ENCODE measurements at regions of chr17 and their contacts with region 1.

Region 1: GRCh38 chr17:56779898-56780733 is 53.6 kb downstream of the C17orf67 start:
- DNase-seq: peak; percentile 95
- ATAC-seq: peak; percentile 91
- H3K4me3 ChIP-seq: peak overlapping the region; percentile 70
- H3K27ac ChIP-seq: peak overlapping the region; percentile 37
- H3K4me1 ChIP-seq: peaks cover 52% of the 10 kb centered on the region
- H3K27me3 ChIP-seq: no peaks in the 10 kb centered on the region
- CTCF ChIP-seq: peak; percentile 97

Region 2: DNA sequence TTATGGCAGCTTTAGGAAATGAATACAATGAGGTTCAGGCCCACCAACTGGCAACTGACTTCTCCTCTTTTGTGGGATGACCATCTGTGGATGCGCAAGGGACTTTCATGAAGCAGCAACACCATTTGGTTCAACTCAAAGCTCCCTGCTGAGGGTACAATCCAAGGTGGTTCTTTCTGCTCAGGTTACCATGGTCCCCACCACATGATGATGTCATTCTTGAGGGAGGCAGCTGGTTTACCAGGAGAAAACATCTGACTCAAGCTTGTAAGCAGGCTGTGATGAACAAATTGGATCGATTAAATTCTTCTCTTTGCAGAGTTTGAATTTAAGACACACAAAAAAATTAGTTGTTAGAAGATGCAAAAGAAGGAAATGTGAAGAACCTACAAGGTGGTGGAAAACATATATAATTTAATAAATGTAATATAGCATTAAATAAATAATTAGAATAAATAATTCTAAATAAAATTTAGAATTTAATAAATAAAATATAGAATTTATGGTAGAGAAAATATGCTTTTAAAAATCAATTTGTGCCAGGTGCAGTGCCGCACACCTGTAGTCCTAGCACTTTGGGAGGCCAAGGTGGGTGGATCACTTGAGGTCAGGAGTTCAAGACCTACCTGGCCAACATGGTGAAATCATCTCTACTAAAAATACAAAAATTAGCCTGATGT is 694.4 kb before region 1 on chr17:
- CTCF ChIA-PET with region 1: no interaction called
- POLR2A ChIA-PET with region 1: no interaction called
- intact Hi-C with region 1: no loop called
- DNase-seq: no peak
- ATAC-seq: no peak
- H3K4me3 ChIP-seq: no peak overlapping the region
- H3K27ac ChIP-seq: no peak overlapping the region
- H3K4me1 ChIP-seq: no peaks in the 10 kb centered on the region
- H3K27me3 ChIP-seq: peaks cover 14% of the 10 kb centered on the region; the same call in 1 of the 2 replicates
- CTCF ChIP-seq: no peak

Region 3: DNA sequence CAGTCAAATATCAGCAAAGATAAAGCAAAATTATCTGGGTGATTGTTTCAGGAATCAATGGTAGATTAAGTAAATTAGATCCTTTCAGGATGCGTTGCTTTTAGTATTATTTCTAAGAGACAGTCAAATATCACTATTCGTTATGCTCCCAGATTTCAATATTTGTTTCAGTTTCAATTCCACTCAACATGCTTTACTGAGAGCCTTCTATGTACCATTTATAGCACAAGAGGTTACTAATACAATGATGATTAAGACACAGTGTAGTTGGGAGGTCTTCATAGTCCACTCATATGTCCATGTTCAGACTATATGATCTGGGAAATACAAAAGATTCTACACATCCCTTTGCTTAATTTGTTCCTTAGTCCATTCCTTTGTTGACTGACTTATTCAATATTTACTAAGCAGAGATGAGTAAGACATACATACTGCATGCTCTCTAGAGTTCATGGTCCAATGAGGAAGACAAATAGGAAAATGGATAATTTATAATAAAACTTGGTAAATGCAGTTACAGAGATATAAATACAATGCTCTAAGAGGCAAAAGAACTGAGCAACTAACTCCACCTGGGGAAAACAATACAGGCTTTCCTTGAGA is 274.9 kb before region 1 on chr17:
- CTCF ChIA-PET with region 1: no interaction called
- POLR2A ChIA-PET with region 1: no interaction called
- intact Hi-C with region 1: loop called (anchors 2 kb)
- DNase-seq: peak; percentile 62
- ATAC-seq: peak; percentile 91
- H3K4me3 ChIP-seq: no peak overlapping the region
- H3K27ac ChIP-seq: no peak overlapping the region
- H3K4me1 ChIP-seq: peaks cover 8% of the 10 kb centered on the region; the same call in 1 of the 2 replicates
- H3K27me3 ChIP-seq: peaks cover 43% of the 10 kb centered on the region
- CTCF ChIP-seq: no peak

Region 4: DNA sequence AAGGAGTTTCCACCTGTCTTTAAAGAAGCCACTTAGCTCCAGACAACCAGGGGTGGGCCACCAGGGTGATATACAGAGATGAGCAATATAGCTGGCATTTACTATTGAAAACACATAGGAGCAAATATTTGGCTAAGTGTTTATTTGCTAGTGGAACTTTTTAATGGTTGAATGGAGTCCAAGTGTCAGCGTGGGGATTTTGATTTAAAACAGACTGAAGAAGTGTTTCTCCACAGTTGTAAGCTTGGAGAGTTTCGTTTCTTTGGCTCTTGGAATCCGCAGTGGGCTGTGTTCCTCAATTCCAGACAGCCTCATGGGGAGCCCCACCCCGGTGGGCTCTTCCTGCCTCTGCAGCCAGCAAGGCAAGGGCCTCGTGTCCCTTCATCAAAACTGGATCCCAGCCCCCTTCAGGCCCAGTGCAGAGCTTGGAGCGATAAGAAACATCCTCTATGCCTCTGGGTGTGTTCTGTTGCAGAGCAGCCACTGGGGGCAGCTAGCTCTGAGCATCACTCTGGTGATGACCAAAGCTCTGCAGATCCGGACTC is 150.5 kb before region 1 on chr17:
- CTCF ChIA-PET with region 1: no interaction called
- POLR2A ChIA-PET with region 1: interaction called, 5 read pairs
- intact Hi-C with region 1: loop called (anchors 1 kb)
- DNase-seq: peak; percentile 71
- ATAC-seq: peak; percentile 97
- H3K4me3 ChIP-seq: no peak overlapping the region; the same call in 1 of the 2 replicates
- H3K27ac ChIP-seq: no peak overlapping the region
- H3K4me1 ChIP-seq: peaks cover 11% of the 10 kb centered on the region; the same call in 1 of the 2 replicates
- H3K27me3 ChIP-seq: no peaks in the 10 kb centered on the region
- CTCF ChIP-seq: peak; percentile 70

Region 5: GRCh38 chr17:56679115-56679766 is 100.9 kb before region 1 on chr17:
- CTCF ChIA-PET with region 1: interaction called, 6 read pairs
- POLR2A ChIA-PET with region 1: no interaction called
- intact Hi-C with region 1: loop called (anchors 1 kb)
- DNase-seq: peak; percentile 68
- ATAC-seq: peak; percentile 45
- H3K4me3 ChIP-seq: peak overlapping the region; percentile 19; the same call in 1 of the 2 replicates
- H3K27ac ChIP-seq: peak overlapping the region; percentile 61
- H3K4me1 ChIP-seq: peaks cover 71% of the 10 kb centered on the region
- H3K27me3 ChIP-seq: no peaks in the 10 kb centered on the region
- CTCF ChIP-seq: peak; percentile 95

Region 6: GRCh38 chr17:56715613-56716357 is 64.3 kb before region 1 on chr17:
- CTCF ChIA-PET with region 1: interaction called, 41 read pairs
- POLR2A ChIA-PET with region 1: interaction called, 4 read pairs
- intact Hi-C with region 1: loop called (anchors 1 kb)
- DNase-seq: peak; percentile 97
- ATAC-seq: peak; percentile 96
- H3K4me3 ChIP-seq: no peak overlapping the region
- H3K27ac ChIP-seq: no peak overlapping the region
- H3K4me1 ChIP-seq: peaks cover 8% of the 10 kb centered on the region; the same call in 1 of the 2 replicates
- H3K27me3 ChIP-seq: no peaks in the 10 kb centered on the region
- CTCF ChIP-seq: peak; percentile 95

Region 7: DNA sequence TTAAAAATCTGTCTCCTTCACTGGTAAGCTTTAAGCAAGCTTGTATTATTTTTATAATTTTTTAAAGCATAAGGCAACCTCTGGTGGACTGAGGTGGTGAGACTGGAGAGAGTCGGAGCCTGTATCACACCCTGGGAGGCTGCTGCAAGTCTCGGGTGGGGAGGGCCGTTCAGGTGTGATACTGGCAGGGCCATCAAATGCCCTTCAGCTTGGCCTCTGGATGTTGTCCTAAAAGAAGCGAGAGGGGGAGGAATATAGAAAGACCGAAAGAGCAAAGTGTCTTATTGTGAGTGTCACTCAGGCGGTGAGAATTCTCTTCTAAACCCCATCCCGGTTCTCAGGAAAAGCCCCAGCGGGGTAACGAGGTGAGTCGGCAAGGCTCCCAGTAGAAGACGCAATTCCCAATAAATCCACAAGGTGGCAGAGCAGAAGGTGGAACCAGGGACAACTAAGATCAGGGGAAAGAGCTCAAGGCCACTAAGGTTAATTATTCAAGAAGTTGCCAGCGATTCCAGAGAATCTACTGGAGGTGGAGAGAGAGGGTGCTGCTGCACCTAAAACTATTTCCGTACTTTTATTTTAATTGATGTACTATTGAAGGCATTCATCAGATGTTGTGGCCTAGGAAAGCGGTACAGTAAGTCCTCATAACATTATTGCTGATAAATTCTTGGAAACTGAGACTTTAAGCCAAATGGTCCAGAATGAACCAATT is 39.5 kb after region 1 on chr17:
- CTCF ChIA-PET with region 1: interaction called, 11 read pairs
- POLR2A ChIA-PET with region 1: no interaction called
- intact Hi-C with region 1: no loop called
- DNase-seq: peak; percentile 95
- ATAC-seq: peak; percentile 83
- H3K4me3 ChIP-seq: peak overlapping the region; percentile 46; the same call in 1 of the 2 replicates
- H3K27ac ChIP-seq: no peak overlapping the region
- H3K4me1 ChIP-seq: no peaks in the 10 kb centered on the region
- H3K27me3 ChIP-seq: no peaks in the 10 kb centered on the region
- CTCF ChIP-seq: peak; percentile 92